Upper lobe of right lung (tissue), 1 donor: ENCODE measurements at regions of chr3 and their contacts with region 1.

Region 1: GRCh38 chr3:191412759-191413158 is 48.2 kb upstream of the PYDC2 start:
- DNase-seq: no peak
- ATAC-seq: no peak
- H3K4me3 ChIP-seq: no peak overlapping the region
- H3K27ac ChIP-seq: no peak overlapping the region
- H3K4me1 ChIP-seq: no peaks in the 10 kb centered on the region
- H3K27me3 ChIP-seq: no peaks in the 10 kb centered on the region
- CTCF ChIP-seq: no peak

Region 2: DNA sequence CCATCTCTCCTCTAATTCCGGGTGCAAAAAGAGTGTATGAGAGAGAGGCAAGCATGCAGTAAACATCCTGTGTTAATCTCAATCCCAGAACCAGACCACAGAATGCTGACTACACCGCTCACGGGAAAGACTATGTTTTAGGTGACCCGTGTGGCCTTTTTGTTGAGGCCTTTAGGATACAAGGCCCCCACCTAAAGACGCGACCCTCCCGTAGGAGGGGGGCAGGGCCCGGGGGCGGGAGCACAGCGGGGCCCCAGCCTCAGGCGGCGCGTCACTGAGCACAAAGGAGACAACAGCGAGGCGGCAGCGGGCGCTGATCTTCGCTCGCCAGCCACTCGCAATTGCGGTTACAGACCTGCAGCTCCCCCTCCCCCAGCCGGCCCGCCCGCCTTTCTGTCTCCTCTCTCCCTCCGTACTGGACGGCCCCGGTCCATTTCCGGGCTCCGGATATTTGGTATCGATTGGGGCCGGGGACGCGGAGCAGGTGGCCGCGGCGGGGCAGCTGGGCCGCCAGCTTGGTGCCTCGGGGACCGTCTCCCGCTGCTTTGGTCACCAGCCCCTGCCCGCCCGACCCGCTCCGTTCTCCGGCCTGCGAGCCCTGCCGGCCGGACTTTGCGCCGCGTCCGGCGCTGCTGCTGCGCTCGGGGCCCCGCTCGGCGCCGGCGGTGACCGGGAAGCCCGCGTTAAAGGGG is 83.7 kb before region 1 on chr3 and contains the start of gene CCDC50:
- intact Hi-C with region 1: no loop called
- DNase-seq: peak; percentile 94
- ATAC-seq: peak; percentile 92
- H3K4me3 ChIP-seq: peak within 1 kb of the TSS; percentile 91
- H3K27ac ChIP-seq: peak within 1 kb of the TSS; percentile 93
- H3K4me1 ChIP-seq: peaks cover 40% of the 10 kb centered on the region
- H3K27me3 ChIP-seq: no peaks in the 10 kb centered on the region
- CTCF ChIP-seq: no peak
- total RNA-seq, gene CCDC50: 73.2 TPM

Region 3: GRCh38 chr3:191627064-191627463 is 214.3 kb after region 1 on chr3:
- intact Hi-C with region 1: no loop called
- DNase-seq: no peak
- ATAC-seq: no peak
- H3K4me3 ChIP-seq: no peak overlapping the region
- H3K27ac ChIP-seq: no peak overlapping the region
- H3K4me1 ChIP-seq: no peaks in the 10 kb centered on the region
- H3K27me3 ChIP-seq: no peaks in the 10 kb centered on the region
- CTCF ChIP-seq: no peak

Region 4: GRCh38 chr3:192444096-192444790 is 1031.5 kb after region 1 on chr3:
- intact Hi-C with region 1: loop called (anchors 10 kb)
- DNase-seq: peak; percentile 76
- ATAC-seq: peak; percentile 95
- H3K4me3 ChIP-seq: no peak overlapping the region
- H3K27ac ChIP-seq: no peak overlapping the region
- H3K4me1 ChIP-seq: no peaks in the 10 kb centered on the region
- H3K27me3 ChIP-seq: peaks cover 33% of the 10 kb centered on the region
- CTCF ChIP-seq: peak; percentile 96